Head of caudate nucleus (tissue), 42 donors: ENCODE measurements at regions of chr3 and their contacts with region 1.

Region 1: GRCh38 chr3:18420555-18420954 is 4.6 kb downstream of the SATB1 start:
- DNase-seq: peak in 1 of 42 donors; percentile 16

Region 2: DNA sequence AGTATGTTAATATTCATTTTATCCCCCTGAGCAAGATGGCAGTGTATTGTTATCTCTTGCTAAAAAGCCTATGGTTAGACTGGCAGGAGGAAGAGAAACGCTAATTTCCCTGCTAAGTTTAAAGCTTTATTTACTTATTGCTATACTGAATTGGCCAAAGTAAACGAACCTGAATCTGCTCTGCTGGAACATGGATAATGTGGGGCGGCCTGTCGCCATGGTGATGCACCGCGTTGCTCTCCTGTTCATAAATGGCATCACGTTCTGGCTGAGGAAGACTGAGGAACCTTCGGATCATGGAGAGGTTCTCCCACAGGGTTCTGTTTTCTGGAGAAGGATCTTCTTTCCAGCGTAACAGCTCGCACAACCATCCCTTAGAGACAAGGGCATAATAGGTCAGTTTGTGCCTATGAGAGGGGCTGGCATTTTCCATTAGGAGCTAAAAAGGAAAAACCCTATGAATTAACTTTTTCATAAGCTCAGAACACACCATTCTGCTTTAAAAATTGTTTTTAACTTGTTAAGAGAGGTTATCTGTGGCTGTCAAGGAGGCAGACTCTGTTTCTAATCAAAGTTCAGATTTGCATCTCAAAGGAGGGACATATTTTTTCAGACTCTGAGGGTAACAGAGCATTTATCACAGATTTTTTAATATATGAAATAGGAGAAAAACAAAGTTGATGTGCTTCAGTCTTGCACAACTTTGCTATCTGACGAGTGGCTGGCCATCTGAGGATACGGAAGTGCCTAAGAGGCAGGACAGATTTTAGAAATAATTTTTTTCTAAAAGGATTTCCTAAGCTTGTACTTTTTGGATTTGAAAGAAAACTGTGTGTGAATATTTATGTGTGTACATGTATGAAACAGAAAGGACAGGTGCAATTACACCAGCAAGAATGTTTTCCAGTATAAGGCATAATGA is 68.5 kb before region 1 on chr3:
- intact Hi-C with region 1: no loop called
- DNase-seq: no peak

Region 3: DNA sequence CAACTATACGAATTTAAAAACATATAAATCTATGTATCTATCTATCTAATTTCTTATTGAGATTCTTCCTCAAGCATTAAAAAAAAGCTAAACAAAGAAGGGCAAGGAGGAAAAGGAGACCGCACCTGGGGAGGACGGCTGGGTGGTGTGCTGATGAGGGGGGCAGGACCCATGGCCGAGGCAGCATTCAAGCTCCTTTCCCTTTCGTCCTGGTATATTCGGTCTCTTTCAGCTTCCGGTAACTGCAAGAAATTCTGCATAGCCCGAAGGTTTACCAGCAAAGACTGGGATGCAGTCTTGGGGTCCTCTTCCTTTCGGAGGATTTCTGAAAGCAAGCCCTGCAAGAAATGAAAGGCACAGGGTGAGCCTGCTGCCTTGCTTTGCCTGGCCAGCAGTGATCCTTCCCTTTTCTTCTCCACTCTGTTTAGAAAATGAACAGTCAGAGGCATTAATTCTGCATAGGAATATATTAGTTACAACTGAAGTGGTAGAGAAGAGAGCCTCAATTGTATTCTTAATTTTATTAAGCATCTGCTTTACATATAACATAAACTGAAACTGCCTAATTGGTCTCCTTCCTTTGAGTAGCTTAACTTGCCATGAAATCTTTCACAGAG is 34.2 kb before region 1 on chr3:
- intact Hi-C with region 1: loop called (anchors 2 kb)
- DNase-seq: no peak